A549 (cell line): ENCODE measurements at regions of chr15 and their contacts with region 1.

Region 1: DNA sequence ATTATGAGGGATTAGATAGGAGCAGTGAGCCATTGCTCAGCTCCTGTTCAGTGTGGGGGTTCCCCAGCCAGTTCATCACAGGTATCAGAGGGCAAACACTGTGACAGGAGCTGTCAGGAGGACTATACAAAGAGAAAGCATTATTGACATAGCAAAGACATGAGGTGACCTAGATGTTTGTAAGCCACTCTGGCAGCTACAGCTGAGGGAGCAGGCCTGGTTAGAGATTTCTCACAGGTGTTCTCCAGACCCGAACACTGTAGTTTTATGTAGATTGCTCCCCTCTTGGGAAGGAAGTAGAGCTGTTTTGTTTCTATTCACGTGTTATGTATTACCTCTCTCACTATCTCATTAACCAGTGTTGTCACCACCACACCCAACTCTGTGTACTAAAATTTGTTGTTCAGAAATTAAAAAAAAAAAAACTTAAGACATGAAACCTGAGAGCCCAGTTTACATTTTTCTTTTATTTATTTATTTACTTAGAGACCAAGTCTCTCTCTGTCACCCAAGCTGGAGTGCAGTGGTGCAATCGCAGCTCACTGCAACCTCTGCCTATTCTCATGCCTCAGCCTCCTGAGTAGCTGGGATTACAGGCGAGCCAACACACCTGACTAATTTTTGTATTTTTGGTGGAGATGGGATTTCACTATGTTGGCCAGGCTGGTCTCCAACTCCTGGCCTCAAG is 123.7 kb downstream of the RBPMS2 start:
- DNase-seq: no peak
- ATAC-seq: peak; percentile 48 to 54; a peak in 3 of 6 replicates
- H3K4me3 ChIP-seq: no peak overlapping the region
- H3K27ac ChIP-seq: no peak overlapping the region
- H3K4me1 ChIP-seq: peaks cover 33% of the 10 kb centered on the region
- CTCF ChIP-seq: no peak
- EP300 ChIP-seq: no peak
- POLR2A ChIP-seq: no peak
- RAD21 ChIP-seq: no peak

Region 2: GRCh38 chr15:64430000-64430735 is 221.5 kb before region 1 on chr15:
- CTCF ChIA-PET with region 1: interaction called, 29 read pairs
- POLR2A ChIA-PET with region 1: no interaction called
- DNase-seq: no peak
- ATAC-seq: no peak
- H3K4me3 ChIP-seq: no peak overlapping the region
- H3K27ac ChIP-seq: no peak overlapping the region
- H3K4me1 ChIP-seq: 0 out of 3 replicates have a peak, but pooled peaks cover 6% of the 10 kb centered on the region
- CTCF ChIP-seq: no peak
- EP300 ChIP-seq: no peak
- POLR2A ChIP-seq: no peak
- RAD21 ChIP-seq: no peak

Region 3: GRCh38 chr15:64634576-64635498 is 16.9 kb before region 1 on chr15:
- CTCF ChIA-PET with region 1: interaction called, 25 read pairs
- POLR2A ChIA-PET with region 1: no interaction called
- DNase-seq: peak in 1 of 2 experiments; percentile 59
- ATAC-seq: peak; percentile 61 to 76; a peak in 4 of 6 replicates
- H3K4me3 ChIP-seq: no peak overlapping the region
- H3K27ac ChIP-seq: peak overlapping the region; percentile 1 to 47; a peak in 4 of 6 replicates
- H3K4me1 ChIP-seq: peaks cover 35% of the 10 kb centered on the region
- CTCF ChIP-seq: no peak
- EP300 ChIP-seq: 0 out of 5 replicates have a peak, but pooled peaks of 1 of the 2 experiments have one; percentile 21
- POLR2A ChIP-seq: no peak
- RAD21 ChIP-seq: no peak

Region 4: GRCh38 chr15:64667736-64668161 is 16.0 kb after region 1 on chr15:
- CTCF ChIA-PET with region 1: interaction called, 38 read pairs
- POLR2A ChIA-PET with region 1: no interaction called
- DNase-seq: no peak
- ATAC-seq: peak in 1 of 2 experiments; percentile 51; a peak in 3 of 6 replicates
- H3K4me3 ChIP-seq: no peak overlapping the region
- H3K27ac ChIP-seq: peak overlapping the region in 1 of 2 experiments; percentile 10; a peak in 1 of 6 replicates
- H3K4me1 ChIP-seq: peaks cover 26% of the 10 kb centered on the region
- CTCF ChIP-seq: no peak
- EP300 ChIP-seq: no peak
- POLR2A ChIP-seq: no peak
- RAD21 ChIP-seq: no peak